ENCODE measurements at regions of chr1 and their contacts with region 1.

Region 1: DNA sequence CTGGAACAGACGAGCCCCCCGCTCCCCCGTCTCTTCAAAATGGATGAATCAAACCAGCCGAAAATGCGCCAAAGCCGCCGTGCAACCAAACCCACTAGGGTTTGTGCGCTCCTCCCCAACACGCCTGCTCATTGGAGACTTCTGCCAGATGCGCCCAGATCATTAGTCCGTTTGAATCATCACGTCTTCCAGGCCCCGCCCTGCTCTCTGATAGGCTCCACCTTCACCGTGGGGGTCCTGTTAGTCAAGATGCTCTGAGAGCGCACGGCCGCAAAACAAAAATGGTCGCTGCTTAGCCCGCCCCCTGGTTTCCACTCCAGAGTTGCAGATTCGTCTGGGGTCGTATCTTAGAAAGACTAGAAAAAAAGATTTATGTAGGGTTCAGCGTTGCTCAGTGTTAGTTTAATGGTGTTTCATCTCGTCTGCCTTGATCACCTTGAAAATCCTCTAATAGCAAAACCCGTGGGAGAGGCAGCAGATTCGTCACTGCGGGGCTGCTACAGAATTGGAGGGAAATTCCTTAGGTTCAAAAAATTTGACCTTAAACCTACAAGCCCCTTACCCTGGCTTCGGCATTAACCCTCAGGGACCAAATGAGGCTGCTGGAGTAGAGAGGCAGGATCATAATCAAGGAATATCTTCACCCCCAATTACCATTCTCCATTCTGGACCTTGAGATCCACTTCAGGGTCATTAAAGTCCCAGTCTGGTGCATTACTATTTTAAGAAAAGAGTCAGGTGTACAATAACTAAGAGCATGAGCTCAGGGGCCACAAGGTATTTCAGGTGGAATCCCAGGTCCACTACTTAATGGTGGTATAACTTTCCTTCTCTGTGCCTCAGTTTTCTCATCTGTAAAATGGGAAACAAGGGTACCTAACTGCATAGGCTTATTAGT is at the start of gene NUCKS1:
- DNase-seq: peak; percentile 97 to 99
- H3K4me3 ChIP-seq: peak within 1 kb of the TSS; percentile 93
- H3K4me3 Mint-ChIP-seq: peak within 1 kb of the TSS; percentile 87
- H3K27ac Mint-ChIP-seq: peak within 1 kb of the TSS; percentile 99
- H3K4me1 ChIP-seq: 0 out of 2 replicates have a peak, but pooled peaks cover 3% of the 10 kb centered on the region
- H3K4me1 Mint-ChIP-seq: peaks cover 7% of the 10 kb centered on the region
- H3K27me3 ChIP-seq: no peaks in the 10 kb centered on the region
- H3K27me3 Mint-ChIP-seq: no peaks in the 10 kb centered on the region
- CTCF ChIP-seq: peak in 1 of 2 experiments; percentile 18
- total RNA-seq, gene NUCKS1: 205 and 215 TPM in 2 replicates

Region 2: GRCh38 chr1:205693421-205693991 is 56.9 kb before region 1 on chr1:
- CTCF ChIA-PET with region 1: no interaction called
- POLR2A ChIA-PET with region 1: no interaction called
- intact Hi-C with region 1: no loop called
- DNase-seq: no peak
- H3K4me3 ChIP-seq: no peak overlapping the region
- H3K4me3 Mint-ChIP-seq: no peak overlapping the region
- H3K27ac Mint-ChIP-seq: no peak overlapping the region
- H3K4me1 ChIP-seq: peaks cover 3% of the 10 kb centered on the region; the same call in 1 of the 2 replicates
- H3K4me1 Mint-ChIP-seq: peaks cover 8% of the 10 kb centered on the region
- H3K27me3 ChIP-seq: no peaks in the 10 kb centered on the region
- H3K27me3 Mint-ChIP-seq: no peaks in the 10 kb centered on the region
- CTCF ChIP-seq: no peak

Region 3: GRCh38 chr1:205711104-205712020 is 39.0 kb before region 1 on chr1:
- CTCF ChIA-PET with region 1: no interaction called
- POLR2A ChIA-PET with region 1: no interaction called
- intact Hi-C with region 1: no loop called
- DNase-seq: peak; percentile 61 to 70
- H3K4me3 ChIP-seq: no peak overlapping the region
- H3K4me3 Mint-ChIP-seq: no peak overlapping the region
- H3K27ac Mint-ChIP-seq: no peak overlapping the region
- H3K4me1 ChIP-seq: peaks cover 10% of the 10 kb centered on the region
- H3K4me1 Mint-ChIP-seq: peaks cover 5% of the 10 kb centered on the region
- H3K27me3 ChIP-seq: no peaks in the 10 kb centered on the region
- H3K27me3 Mint-ChIP-seq: no peaks in the 10 kb centered on the region
- CTCF ChIP-seq: peak; percentile 85 to 87

Region 4: GRCh38 chr1:205739348-205740160 is 10.8 kb before region 1 on chr1:
- CTCF ChIA-PET with region 1: no interaction called
- POLR2A ChIA-PET with region 1: interaction called, 18 read pairs
- intact Hi-C with region 1: no loop called
- DNase-seq: peak in 1 of 2 experiments; percentile 23
- H3K4me3 ChIP-seq: no peak overlapping the region
- H3K4me3 Mint-ChIP-seq: no peak overlapping the region
- H3K27ac Mint-ChIP-seq: no peak overlapping the region
- H3K4me1 ChIP-seq: no peaks in the 10 kb centered on the region
- H3K4me1 Mint-ChIP-seq: peaks cover 10% of the 10 kb centered on the region
- H3K27me3 ChIP-seq: no peaks in the 10 kb centered on the region
- H3K27me3 Mint-ChIP-seq: no peaks in the 10 kb centered on the region
- CTCF ChIP-seq: peak in 1 of 2 experiments; percentile 36

Region 5: GRCh38 chr1:205775015-205775716 is 24.8 kb after region 1 on chr1 and contains the start of gene RAB29:
- CTCF ChIA-PET with region 1: no interaction called
- POLR2A ChIA-PET with region 1: no interaction called
- intact Hi-C with region 1: loop called (anchors 1 kb)
- DNase-seq: peak; percentile 77 to 79
- H3K4me3 ChIP-seq: peak within 1 kb of the TSS; percentile 79
- H3K4me3 Mint-ChIP-seq: peak within 1 kb of the TSS; percentile 99
- H3K27ac Mint-ChIP-seq: peak within 1 kb of the TSS; percentile 61
- H3K4me1 ChIP-seq: peaks cover 14% of the 10 kb centered on the region
- H3K4me1 Mint-ChIP-seq: peaks cover 6% of the 10 kb centered on the region
- H3K27me3 ChIP-seq: no peaks in the 10 kb centered on the region
- H3K27me3 Mint-ChIP-seq: no peaks in the 10 kb centered on the region
- CTCF ChIP-seq: no peak
- total RNA-seq, gene RAB29: 11.0 and 11.9 TPM in 2 replicates